ENCODE measurements at regions of chr11 and their contacts with region 1.

Region 1: DNA sequence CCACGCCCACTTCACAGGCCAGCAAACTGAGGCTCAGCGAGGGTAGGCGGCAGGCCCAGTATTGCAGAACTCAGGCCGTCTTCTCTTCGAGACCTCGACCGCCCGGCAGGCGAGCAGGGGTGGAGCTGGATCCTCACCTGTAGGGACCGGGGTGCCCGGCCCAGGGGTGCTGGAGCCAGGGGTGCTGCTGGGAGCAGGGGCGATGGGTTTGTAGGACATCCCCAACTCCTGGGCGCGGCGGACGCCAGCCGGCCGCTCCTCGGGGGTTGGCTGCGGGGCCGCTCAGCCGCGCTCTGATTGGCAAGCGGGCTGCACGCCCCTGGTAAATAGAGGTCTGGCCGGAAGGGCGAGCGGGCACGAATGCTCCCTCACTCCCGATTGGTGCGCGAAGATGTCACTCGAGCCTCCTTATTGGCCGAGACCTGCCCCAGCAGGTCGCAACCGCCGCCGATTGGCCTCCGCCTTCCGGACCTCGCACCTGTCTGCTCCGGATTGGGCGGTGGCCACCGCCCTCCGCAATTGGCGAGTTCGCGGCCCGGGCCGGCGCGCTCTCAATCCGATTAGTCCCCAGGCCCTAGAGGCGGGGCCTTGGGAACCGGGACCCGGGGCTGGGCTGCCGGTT is at the start of gene CDK2AP2:
- DNase-seq: peak; percentile 94 to 98
- ATAC-seq: peak; percentile 70 to 88 (median 78)
- H3K4me3 ChIP-seq: peak within 1 kb of the TSS; percentile 57
- H3K4me3 Mint-ChIP-seq: peak within 1 kb of the TSS; percentile 83
- H3K27ac ChIP-seq: peak within 1 kb of the TSS; percentile 97
- H3K27ac Mint-ChIP-seq: peak within 1 kb of the TSS; percentile 95 to 97
- H3K4me1 ChIP-seq: peaks cover 43% of the 10 kb centered on the region
- H3K4me1 Mint-ChIP-seq: peaks cover 27 to 50% of the 10 kb centered on the region in 2 donors
- H3K27me3 ChIP-seq: no peaks in the 10 kb centered on the region
- H3K27me3 Mint-ChIP-seq: peaks cover 7% of the 10 kb centered on the region in 2 donors
- CTCF ChIP-seq: no peak
- total RNA-seq, gene CDK2AP2: 57.9 to 67.7 (median 65.5) TPM

Region 2: GRCh38 chr11:67353317-67354074 is 154.5 kb before region 1 on chr11 and contains the start of gene POLD4:
- intact Hi-C with region 1: loop called (anchors 1 kb)
- DNase-seq: peak; percentile 95 to 96
- ATAC-seq: peak; percentile 82 to 94 (median 89)
- H3K4me3 ChIP-seq: peak within 1 kb of the TSS; percentile 73
- H3K4me3 Mint-ChIP-seq: peak within 1 kb of the TSS; percentile 97
- H3K27ac ChIP-seq: peak within 1 kb of the TSS; percentile 97
- H3K27ac Mint-ChIP-seq: peak within 1 kb of the TSS; percentile 96 to 99
- H3K4me1 ChIP-seq: peaks cover 78% of the 10 kb centered on the region
- H3K4me1 Mint-ChIP-seq: peaks cover 23 to 41% of the 10 kb centered on the region in 2 donors
- H3K27me3 ChIP-seq: no peaks in the 10 kb centered on the region
- H3K27me3 Mint-ChIP-seq: peaks cover 0 to 4% of the 10 kb centered on the region in 2 donors
- CTCF ChIP-seq: no peak
- total RNA-seq, gene POLD4: 45.8 to 63.7 (median 60.5) TPM

Region 3: GRCh38 chr11:67389477-67389876 is 118.5 kb before region 1 on chr11:
- intact Hi-C with region 1: loop called (anchors 1 kb)
- DNase-seq: peak; percentile 50 to 73
- ATAC-seq: peak; percentile 35 to 49 (median 47)
- H3K4me3 ChIP-seq: no peak overlapping the region
- H3K4me3 Mint-ChIP-seq: peak overlapping the region; percentile 85
- H3K27ac ChIP-seq: no peak overlapping the region
- H3K27ac Mint-ChIP-seq: peak overlapping the region; percentile 84 to 85
- H3K4me1 ChIP-seq: peaks cover 20% of the 10 kb centered on the region
- H3K4me1 Mint-ChIP-seq: peaks cover 22 to 42% of the 10 kb centered on the region in 2 donors
- H3K27me3 ChIP-seq: no peaks in the 10 kb centered on the region
- H3K27me3 Mint-ChIP-seq: peaks cover 7 to 8% of the 10 kb centered on the region in 2 donors
- CTCF ChIP-seq: peak; percentile 48

Region 4: DNA sequence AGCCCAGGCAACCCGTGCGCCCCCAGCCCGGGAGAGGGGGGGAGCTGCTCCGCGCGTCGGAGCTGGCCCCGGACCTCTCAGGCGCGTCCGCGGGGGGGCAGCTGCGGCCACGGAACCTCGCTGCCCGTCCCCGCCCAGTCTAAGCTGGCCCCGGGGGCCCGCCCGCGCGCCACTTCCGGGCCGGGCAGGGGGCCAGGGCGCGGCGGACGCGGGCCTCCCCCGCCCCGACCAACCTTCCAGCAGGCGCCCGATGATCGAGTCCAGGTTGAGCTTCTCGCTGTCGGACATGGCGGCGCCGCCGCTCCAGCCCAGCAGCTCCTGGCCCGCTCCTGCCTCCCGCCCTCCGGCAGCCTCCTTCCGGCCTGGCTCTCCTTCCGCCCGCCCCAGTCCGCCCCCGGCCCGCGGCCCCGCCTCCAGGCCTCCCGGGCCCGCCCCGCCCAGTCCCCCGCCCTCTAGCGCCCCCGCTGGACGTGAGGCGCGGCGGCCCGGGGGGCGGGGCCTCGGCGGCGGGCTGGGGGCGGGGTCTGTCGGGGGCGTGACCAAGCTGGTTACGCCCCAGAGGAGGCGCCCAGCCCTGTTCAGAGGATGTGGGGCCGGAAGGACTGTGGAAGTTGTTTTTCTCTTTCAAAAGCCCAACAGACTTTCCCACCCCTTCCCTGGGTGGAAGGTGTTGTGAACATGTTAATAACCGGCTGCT is 106.3 kb before region 1 on chr11 and contains the start of gene PPP1CA:
- intact Hi-C with region 1: loop called (anchors 5 kb)
- DNase-seq: peak; percentile 93 to 94
- ATAC-seq: peak; percentile 79 to 93 (median 82)
- H3K4me3 ChIP-seq: peak within 1 kb of the TSS; percentile 69
- H3K4me3 Mint-ChIP-seq: peak within 1 kb of the TSS; percentile 94
- H3K27ac ChIP-seq: peak within 1 kb of the TSS; percentile 63
- H3K27ac Mint-ChIP-seq: peak within 1 kb of the TSS; percentile 86 to 96
- H3K4me1 ChIP-seq: peaks cover 91% of the 10 kb centered on the region
- H3K4me1 Mint-ChIP-seq: peaks cover 44 to 59% of the 10 kb centered on the region in 2 donors
- H3K27me3 ChIP-seq: no peaks in the 10 kb centered on the region
- H3K27me3 Mint-ChIP-seq: no peaks in the 10 kb centered on the region
- CTCF ChIP-seq: peak; percentile 60
- total RNA-seq, gene PPP1CA: 222 to 245 (median 233) TPM

Region 5: DNA sequence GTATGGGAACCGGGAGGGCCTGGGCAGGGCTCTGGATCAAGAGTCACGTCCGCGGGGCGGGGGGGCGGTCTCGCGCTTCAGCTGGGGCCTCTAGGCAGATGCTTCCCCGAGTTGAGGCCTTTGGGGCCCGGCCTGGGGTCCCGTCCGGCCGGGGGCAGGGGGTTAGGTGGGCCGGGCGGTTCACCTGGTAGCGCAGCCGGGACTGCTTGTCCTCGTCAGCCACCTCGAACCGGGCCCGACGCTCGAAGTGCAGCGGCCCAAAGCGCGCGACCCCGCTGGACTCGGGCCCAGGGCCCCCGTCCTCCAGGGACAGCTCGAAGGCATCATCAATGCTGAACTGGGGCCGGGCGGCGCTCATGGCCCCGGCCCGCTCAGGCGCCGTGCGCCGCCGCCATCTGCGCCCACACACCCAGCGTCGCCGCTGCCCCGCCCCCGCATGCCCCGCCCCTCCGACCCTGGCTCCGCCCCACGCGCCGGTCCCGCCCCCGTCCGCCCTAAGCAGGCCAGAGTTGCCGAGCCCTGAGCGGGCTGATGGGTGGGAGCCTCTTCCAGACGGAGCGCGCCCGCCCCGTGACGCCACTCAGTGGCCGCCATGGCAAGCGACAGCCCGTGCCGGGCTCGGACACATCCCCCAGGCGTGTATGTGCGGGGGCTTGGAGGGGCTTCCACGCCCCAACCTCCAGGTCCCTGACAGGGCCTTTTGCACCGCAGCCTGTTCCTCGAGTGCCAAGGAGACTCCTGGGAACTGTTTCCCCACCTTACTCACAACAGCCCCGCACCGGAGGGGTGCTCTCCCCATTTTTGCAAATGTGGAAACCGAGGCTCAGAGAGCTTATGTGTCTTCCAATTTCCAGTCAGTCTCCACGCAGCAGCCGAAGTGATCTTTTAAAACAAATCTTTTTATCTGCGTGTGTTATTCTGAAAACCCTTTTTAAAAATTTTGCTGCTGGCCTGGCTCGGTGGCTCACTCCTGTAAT is 38.9 kb before region 1 on chr11 and contains the start of gene TMEM134:
- intact Hi-C with region 1: loop called (anchors 1 kb)
- DNase-seq: peak; percentile 88 to 94
- ATAC-seq: peak; percentile 84 to 94 (median 84)
- H3K4me3 ChIP-seq: peak within 1 kb of the TSS; percentile 66
- H3K4me3 Mint-ChIP-seq: peak within 1 kb of the TSS; percentile 85
- H3K27ac ChIP-seq: peak within 1 kb of the TSS; percentile 89
- H3K27ac Mint-ChIP-seq: peak within 1 kb of the TSS; percentile 78 to 82
- H3K4me1 ChIP-seq: peaks cover 36% of the 10 kb centered on the region
- H3K4me1 Mint-ChIP-seq: peaks cover 12 to 36% of the 10 kb centered on the region in 2 donors
- H3K27me3 ChIP-seq: no peaks in the 10 kb centered on the region
- H3K27me3 Mint-ChIP-seq: no peaks in the 10 kb centered on the region
- CTCF ChIP-seq: no peak
- total RNA-seq, gene TMEM134: 57.8 to 65.7 (median 61.2) TPM

Region 6: DNA sequence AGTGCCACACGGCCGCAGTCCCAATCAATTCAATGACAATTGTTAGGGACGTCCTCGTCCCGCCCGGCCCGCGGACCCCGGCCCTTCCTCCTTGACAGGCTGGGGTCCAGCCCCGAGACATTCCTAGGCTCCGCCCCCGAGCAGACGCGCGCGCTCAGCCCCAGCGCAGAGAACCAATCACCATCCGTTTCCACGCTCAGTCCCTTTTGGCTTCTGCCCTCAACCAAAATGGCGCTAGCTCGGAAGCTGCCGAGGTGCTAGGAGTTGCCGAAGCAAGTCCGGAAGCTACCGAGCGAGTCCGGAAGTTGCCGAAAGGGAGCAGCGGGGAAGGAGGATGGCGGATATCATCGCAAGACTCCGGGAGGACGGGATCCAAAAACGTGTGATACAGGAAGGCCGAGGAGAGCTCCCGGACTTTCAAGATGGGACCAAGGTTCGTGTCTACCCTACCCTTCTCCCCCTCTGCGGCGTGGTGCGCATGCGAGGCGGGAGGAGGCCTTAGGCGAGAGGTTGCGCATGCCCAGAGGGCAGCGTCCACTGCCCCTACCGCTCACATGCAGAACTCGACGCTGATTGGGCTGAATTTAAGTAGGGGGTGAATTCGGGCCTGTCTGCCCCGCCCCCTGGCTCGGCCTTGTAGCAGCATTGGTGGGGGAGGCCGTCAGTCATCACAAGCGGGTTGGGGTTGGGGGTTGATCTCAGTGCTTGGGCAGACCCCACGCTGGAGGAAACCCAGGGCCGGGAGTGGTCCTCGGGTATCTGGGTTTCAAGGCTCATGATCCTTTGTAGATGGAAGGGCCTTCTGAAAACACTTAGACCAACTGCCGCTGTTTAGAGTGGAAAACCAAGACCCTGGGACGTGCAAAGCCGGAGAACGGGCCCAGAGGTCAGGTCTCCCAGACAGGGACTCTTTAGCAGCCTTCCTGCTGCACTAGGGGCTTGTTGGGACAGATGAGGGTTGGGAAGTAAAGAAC is 24.9 kb before region 1 on chr11 and contains the start of gene AIP:
- intact Hi-C with region 1: loop called (anchors 2 kb)
- DNase-seq: peak; percentile 95 to 99
- ATAC-seq: peak; percentile 86 to 96 (median 92)
- H3K4me3 ChIP-seq: peak within 1 kb of the TSS; percentile 48
- H3K4me3 Mint-ChIP-seq: peak within 1 kb of the TSS; percentile 99
- H3K27ac ChIP-seq: peak within 1 kb of the TSS; percentile 74
- H3K27ac Mint-ChIP-seq: peak within 1 kb of the TSS; percentile 97 to 98
- H3K4me1 ChIP-seq: peaks cover 55% of the 10 kb centered on the region
- H3K4me1 Mint-ChIP-seq: peaks cover 50 to 52% of the 10 kb centered on the region in 2 donors
- H3K27me3 ChIP-seq: no peaks in the 10 kb centered on the region
- H3K27me3 Mint-ChIP-seq: no peaks in the 10 kb centered on the region
- CTCF ChIP-seq: no peak
- total RNA-seq, gene AIP: 93.3 to 113 (median 98.1) TPM

Region 7: DNA sequence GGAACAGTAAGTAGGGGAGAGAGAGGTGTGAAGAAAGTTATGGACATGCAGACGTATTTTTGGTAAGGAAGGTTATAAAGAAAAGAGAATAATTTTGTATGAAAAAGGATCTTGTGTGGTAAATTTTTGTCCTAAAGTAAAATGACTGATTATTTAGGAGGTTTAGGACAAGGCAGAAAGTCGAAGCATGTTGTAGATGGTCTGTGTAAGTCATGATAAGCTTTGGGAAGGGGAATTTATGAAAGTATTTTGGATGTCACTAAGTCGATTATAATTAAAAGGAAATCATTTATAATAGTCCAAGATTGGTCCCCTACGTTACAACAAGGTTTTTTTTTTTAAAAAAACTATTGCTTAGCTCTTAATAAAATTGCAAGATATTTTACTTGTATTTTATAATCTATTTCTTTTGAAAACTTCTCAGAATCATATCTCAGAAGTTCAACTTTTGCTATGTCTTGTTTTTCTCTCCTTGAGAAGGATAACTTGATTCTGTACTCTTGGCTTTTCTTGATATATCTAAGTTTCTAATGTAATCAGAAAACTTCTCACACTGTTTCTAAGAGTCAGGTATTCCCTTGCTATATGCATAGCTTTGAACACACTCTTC is 26.2 kb after region 1 on chr11:
- intact Hi-C with region 1: no loop called
- DNase-seq: no peak
- ATAC-seq: no peak
- H3K4me3 ChIP-seq: no peak overlapping the region
- H3K4me3 Mint-ChIP-seq: no peak overlapping the region
- H3K27ac ChIP-seq: no peak overlapping the region
- H3K27ac Mint-ChIP-seq: no peak overlapping the region
- H3K4me1 ChIP-seq: no peaks in the 10 kb centered on the region
- H3K4me1 Mint-ChIP-seq: no peaks in the 10 kb centered on the region
- H3K27me3 ChIP-seq: no peaks in the 10 kb centered on the region
- H3K27me3 Mint-ChIP-seq: peaks cover 6 to 7% of the 10 kb centered on the region in 2 donors
- CTCF ChIP-seq: no peak

Region 8: GRCh38 chr11:67613960-67614715 is 106.2 kb after region 1 on chr11:
- intact Hi-C with region 1: loop called (anchors 10 kb)
- DNase-seq: peak; percentile 88 to 95
- ATAC-seq: peak; percentile 86 to 94 (median 90)
- H3K4me3 ChIP-seq: peak overlapping the region; percentile 44
- H3K4me3 Mint-ChIP-seq: peak overlapping the region; percentile 82
- H3K27ac ChIP-seq: peak overlapping the region; percentile 100
- H3K27ac Mint-ChIP-seq: peak overlapping the region; percentile 96 to 99
- H3K4me1 ChIP-seq: peaks cover 49% of the 10 kb centered on the region
- H3K4me1 Mint-ChIP-seq: peaks cover 15 to 46% of the 10 kb centered on the region in 2 donors
- H3K27me3 ChIP-seq: no peaks in the 10 kb centered on the region
- H3K27me3 Mint-ChIP-seq: no peaks in the 10 kb centered on the region
- CTCF ChIP-seq: peak; percentile 54